PC-9 (cell line): ENCODE measurements at regions of chr14 and their contacts with region 1.

Region 1: DNA sequence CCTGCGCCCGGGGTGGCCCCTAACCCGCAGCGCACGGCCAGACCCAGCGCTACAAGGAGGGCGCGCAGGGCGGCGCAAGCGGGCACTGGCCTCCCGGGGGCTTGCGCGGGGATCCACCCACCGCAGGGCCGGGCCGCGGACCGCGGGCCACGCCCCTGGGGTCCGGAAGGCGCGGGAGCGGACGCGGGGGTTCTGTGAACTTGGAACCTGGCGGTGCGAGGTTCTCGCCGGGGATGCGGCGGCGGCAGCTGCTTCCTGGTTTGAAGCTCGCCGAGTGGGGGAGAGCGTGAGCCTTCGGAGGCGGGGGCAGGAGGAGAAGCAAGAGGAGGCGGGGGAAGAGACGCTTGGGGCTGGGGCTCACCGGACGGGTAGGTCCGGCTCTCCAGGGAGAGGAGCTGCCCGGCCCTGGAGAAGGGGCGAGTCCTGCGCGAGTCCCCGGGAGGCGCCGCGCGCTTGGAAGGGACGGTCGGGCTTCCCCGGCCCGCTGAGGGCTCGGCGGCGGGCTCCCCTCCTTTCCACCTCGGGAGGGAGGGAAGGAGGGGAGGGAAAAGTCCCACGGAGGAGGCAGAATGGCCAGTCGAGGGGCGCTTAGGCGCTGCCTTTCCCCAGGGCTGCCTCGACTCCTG is at the start of gene PRKCH:
- DNase-seq: peak; percentile 91 to 93
- H3K4me3 ChIP-seq: peak within 1 kb of the TSS; percentile 59
- H3K27ac ChIP-seq: peak within 1 kb of the TSS; percentile 52
- H3K4me1 ChIP-seq: peaks cover 30% of the 10 kb centered on the region
- H3K27me3 ChIP-seq: no peaks in the 10 kb centered on the region
- CTCF ChIP-seq: peak; percentile 46; the same call in 1 of the 2 replicates
- total RNA-seq, gene PRKCH: 32.4 and 49.8 TPM in 2 replicates

Region 2: GRCh38 chr14:61355892-61356325 is 34.4 kb after region 1 on chr14:
- CTCF ChIA-PET with region 1: interaction called, 4 read pairs
- POLR2A ChIA-PET with region 1: no interaction called
- intact Hi-C with region 1: loop called (anchors 1 kb)
- DNase-seq: peak; percentile 94 to 100
- H3K4me3 ChIP-seq: peak overlapping the region; percentile 48; the same call in 1 of the 2 replicates
- H3K27ac ChIP-seq: peak overlapping the region; percentile 95
- H3K4me1 ChIP-seq: peaks cover 65% of the 10 kb centered on the region
- H3K27me3 ChIP-seq: no peaks in the 10 kb centered on the region
- CTCF ChIP-seq: no peak

Region 3: GRCh38 chr14:61381547-61381946 is 60.0 kb after region 1 on chr14:
- CTCF ChIA-PET with region 1: no interaction called
- POLR2A ChIA-PET with region 1: no interaction called
- intact Hi-C with region 1: loop called (anchors 2 kb)
- DNase-seq: peak; percentile 61 to 73
- H3K4me3 ChIP-seq: no peak overlapping the region
- H3K27ac ChIP-seq: peak overlapping the region; percentile 36
- H3K4me1 ChIP-seq: peaks cover 54% of the 10 kb centered on the region
- H3K27me3 ChIP-seq: no peaks in the 10 kb centered on the region
- CTCF ChIP-seq: no peak

Region 4: DNA sequence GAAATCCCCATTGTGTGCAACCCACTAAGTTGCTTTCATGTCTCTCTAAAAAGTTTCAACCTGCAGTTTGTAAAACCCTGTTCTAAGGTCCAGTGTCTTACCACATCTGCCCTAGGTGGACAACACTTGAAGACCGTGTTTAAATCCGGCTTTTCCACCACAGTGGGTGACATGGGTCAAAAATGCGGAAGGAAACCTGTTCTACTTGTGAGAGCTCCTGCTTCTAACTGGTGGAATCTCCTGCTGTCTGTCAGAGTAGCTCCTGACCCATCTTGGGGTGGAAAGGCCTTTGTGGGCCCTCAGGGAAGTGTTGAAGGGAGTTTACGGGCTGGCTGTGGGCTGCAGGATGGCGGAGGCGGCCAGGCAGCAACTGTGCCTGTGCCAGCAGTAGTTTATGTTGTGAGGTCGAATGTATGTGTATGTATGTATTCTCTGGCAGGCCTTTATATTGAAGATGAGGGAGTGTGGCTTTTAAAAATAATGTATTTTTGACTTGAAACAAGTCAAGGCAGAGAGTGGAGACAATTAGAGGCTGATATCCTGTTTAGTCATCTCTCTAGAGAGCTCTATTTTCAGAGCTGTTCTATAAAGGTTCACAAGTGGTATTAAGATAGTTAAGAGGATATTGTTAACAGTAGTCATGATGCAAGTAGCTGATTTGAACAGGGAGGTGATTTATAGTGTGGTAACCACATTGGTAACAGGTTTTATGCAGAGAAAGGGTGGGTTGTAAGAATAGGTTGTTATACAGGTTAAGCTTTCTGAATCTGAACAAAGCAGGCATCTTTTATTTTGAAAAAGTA is 66.9 kb after region 1 on chr14:
- CTCF ChIA-PET with region 1: no interaction called
- POLR2A ChIA-PET with region 1: no interaction called
- intact Hi-C with region 1: loop called (anchors 1 kb)
- DNase-seq: peak; percentile 73 to 98
- H3K4me3 ChIP-seq: peak overlapping the region; percentile 36; the same call in 1 of the 2 replicates
- H3K27ac ChIP-seq: peak overlapping the region; percentile 97
- H3K4me1 ChIP-seq: peaks cover 69% of the 10 kb centered on the region
- H3K27me3 ChIP-seq: no peaks in the 10 kb centered on the region
- CTCF ChIP-seq: no peak

Region 5: GRCh38 chr14:61438860-61439684 is 117.6 kb after region 1 on chr14:
- CTCF ChIA-PET with region 1: interaction called, 4 read pairs
- POLR2A ChIA-PET with region 1: no interaction called
- intact Hi-C with region 1: loop called (anchors 1 kb)
- DNase-seq: peak; percentile 74 to 100
- H3K4me3 ChIP-seq: peak overlapping the region; percentile 50
- H3K27ac ChIP-seq: peak overlapping the region; percentile 93
- H3K4me1 ChIP-seq: peaks cover 37% of the 10 kb centered on the region
- H3K27me3 ChIP-seq: no peaks in the 10 kb centered on the region
- CTCF ChIP-seq: no peak

Region 6: GRCh38 chr14:61456720-61457119 is 135.2 kb after region 1 on chr14:
- CTCF ChIA-PET with region 1: no interaction called
- POLR2A ChIA-PET with region 1: no interaction called
- intact Hi-C with region 1: loop called (anchors 2 kb)
- DNase-seq: peak; percentile 65 to 72
- H3K4me3 ChIP-seq: no peak overlapping the region
- H3K27ac ChIP-seq: no peak overlapping the region
- H3K4me1 ChIP-seq: peaks cover 13% of the 10 kb centered on the region
- H3K27me3 ChIP-seq: no peaks in the 10 kb centered on the region
- CTCF ChIP-seq: peak; percentile 94

Region 7: DNA sequence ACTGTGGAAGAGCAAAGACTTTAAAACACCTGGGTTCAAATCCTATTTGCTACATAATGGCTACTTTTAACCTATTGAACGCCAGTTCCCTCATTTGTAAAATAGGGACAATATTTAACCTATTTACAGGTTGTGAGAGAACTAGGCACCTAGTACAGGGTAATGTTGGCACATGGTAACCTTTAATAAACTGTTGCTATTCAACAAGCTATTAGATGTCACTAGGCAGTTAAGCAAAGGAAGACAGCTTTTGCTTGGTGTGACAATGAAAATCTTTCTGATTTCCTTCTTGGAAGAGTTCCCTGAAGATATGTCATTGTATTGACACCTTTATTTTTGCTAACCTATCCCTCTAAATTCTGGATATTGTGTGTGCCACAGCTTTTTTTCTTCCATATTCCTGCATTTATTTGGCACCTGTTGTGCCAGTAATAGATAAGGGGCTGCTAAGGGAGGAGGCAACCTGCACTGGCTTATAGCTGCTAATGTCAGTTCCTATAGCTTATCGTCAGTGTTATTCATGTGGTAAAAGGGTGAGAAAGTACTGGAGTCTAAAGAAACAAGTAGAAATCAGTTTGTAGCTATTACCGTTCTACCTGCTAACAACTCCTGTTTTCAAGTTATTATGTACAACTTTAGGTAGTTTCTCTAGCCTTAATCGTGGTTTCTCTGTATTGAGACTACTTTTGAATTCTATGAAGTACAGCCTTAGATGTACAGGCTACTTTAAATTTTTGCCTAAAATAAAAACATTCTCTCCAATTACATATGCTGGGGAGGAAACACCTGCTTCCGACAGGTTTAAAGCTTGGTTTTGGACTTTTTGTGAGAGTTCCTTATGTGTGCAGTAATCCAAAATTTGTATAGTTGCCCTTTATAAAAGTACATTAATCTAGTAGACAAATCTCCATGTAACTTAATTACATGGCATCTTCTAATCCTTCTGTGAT is 398.1 kb after region 1 on chr14:
- CTCF ChIA-PET with region 1: no interaction called
- POLR2A ChIA-PET with region 1: interaction called, 12 read pairs
- intact Hi-C with region 1: no loop called
- DNase-seq: no peak
- H3K4me3 ChIP-seq: no peak overlapping the region
- H3K27ac ChIP-seq: peak overlapping the region; percentile 40
- H3K4me1 ChIP-seq: peaks cover 57% of the 10 kb centered on the region
- H3K27me3 ChIP-seq: no peaks in the 10 kb centered on the region
- CTCF ChIP-seq: no peak